CD4-positive, alpha-beta memory T cell (primary cell): ENCODE measurements at regions of chr7 and their contacts with region 1.

Region 1: GRCh38 chr7:121547544-121548092 is 151.5 kb upstream of the FAM3C start:
- DNase-seq: peak in 4 of 5 donors; percentile 42 to 58 (median 48)
- H3K4me3 ChIP-seq: no peak overlapping the region
- H3K4me3 Mint-ChIP-seq: no peak overlapping the region
- H3K27ac ChIP-seq: no peak overlapping the region
- H3K27ac Mint-ChIP-seq: no peak overlapping the region
- H3K4me1 ChIP-seq: no peaks in the 10 kb centered on the region
- H3K4me1 Mint-ChIP-seq: peaks cover 0 to 6% (median 5%) of the 10 kb centered on the region in 4 donors
- H3K27me3 ChIP-seq: no peaks in the 10 kb centered on the region
- H3K27me3 Mint-ChIP-seq: peaks cover 0 to 3% of the 10 kb centered on the region in 2 donors

Region 2: GRCh38 chr7:120838281-120838682 is 709.3 kb before region 1 on chr7:
- CTCF ChIA-PET with region 1: no interaction called
- POLR2A ChIA-PET with region 1: no interaction called
- intact Hi-C with region 1: no loop called
- DNase-seq: no peak
- H3K4me3 ChIP-seq: no peak overlapping the region
- H3K4me3 Mint-ChIP-seq: no peak overlapping the region
- H3K27ac ChIP-seq: no peak overlapping the region
- H3K27ac Mint-ChIP-seq: peak overlapping the region in 1 of 7 donors; percentile 26
- H3K4me1 ChIP-seq: no peaks in the 10 kb centered on the region
- H3K4me1 Mint-ChIP-seq: no peaks in the 10 kb centered on the region
- H3K27me3 ChIP-seq: no peaks in the 10 kb centered on the region
- H3K27me3 Mint-ChIP-seq: peaks cover 4 to 8% of the 10 kb centered on the region in 2 donors

Region 3: DNA sequence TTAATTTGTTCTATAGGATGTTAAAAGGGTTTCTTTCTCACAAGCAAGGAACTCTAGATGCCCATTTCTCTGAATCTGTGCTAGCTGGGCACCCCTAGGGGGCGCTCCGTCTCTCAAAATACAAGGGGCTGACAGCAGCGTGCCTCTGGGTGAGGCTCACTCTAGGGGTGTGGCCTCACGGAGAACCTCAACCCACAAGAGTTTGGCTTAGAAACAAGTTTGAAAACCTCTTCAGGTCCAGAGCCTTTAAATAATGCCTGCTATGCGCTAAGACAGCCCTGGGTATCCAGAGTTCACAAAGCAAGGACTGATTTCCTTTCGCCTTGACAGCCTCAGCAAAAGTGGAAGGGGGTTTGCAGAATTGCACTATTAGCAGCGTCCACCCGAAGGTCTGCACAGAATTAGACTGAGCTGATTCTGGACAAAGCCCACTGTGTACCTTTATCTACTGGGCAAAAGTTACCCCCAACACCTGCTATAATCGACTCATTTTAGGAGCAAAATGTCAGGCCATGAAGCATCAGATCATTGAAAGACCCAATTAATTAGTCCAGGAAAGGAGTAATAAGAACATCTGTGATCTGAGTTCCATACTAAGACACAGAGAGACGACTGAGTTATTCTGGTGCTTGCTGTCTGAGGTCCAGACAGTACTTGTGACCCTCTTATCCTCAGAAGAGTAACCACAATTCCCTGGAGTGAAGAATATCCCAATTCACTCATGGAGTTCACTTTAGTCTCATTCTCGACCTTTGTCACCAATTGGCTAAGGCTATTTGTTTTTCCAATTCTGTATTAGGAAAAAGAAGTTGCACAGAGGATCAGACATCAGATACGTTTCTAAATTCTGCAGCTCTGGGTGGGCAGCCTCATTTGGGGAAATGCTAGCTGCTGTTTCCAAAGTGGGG is 559.7 kb before region 1 on chr7:
- CTCF ChIA-PET with region 1: interaction called, 3 read pairs
- POLR2A ChIA-PET with region 1: no interaction called
- intact Hi-C with region 1: loop called (anchors 1 kb)
- DNase-seq: peak; percentile 81 to 88 (median 86)
- H3K4me3 ChIP-seq: peak overlapping the region in 1 of 2 donors; percentile 22
- H3K4me3 Mint-ChIP-seq: peak overlapping the region; percentile 61 to 82 (median 75)
- H3K27ac ChIP-seq: no peak overlapping the region
- H3K27ac Mint-ChIP-seq: peak overlapping the region in 1 of 7 donors; percentile 15
- H3K4me1 ChIP-seq: peaks cover 15% of the 10 kb centered on the region
- H3K4me1 Mint-ChIP-seq: peaks cover 13 to 20% (median 15%) of the 10 kb centered on the region in 4 donors
- H3K27me3 ChIP-seq: peaks cover 39% of the 10 kb centered on the region
- H3K27me3 Mint-ChIP-seq: peaks cover 30 to 34% of the 10 kb centered on the region in 2 donors

Region 4: GRCh38 chr7:121366852-121367431 is 180.7 kb before region 1 on chr7:
- CTCF ChIA-PET with region 1: interaction called, 108 read pairs
- POLR2A ChIA-PET with region 1: no interaction called
- intact Hi-C with region 1: loop called (anchors 1 kb)
- DNase-seq: peak in 4 of 5 donors; percentile 48 to 56 (median 56)
- H3K4me3 ChIP-seq: no peak overlapping the region
- H3K4me3 Mint-ChIP-seq: no peak overlapping the region
- H3K27ac ChIP-seq: no peak overlapping the region
- H3K27ac Mint-ChIP-seq: peak overlapping the region in 1 of 7 donors; percentile 59
- H3K4me1 ChIP-seq: peaks cover 6% of the 10 kb centered on the region
- H3K4me1 Mint-ChIP-seq: peaks cover 5 to 11% (median 7%) of the 10 kb centered on the region in 4 donors
- H3K27me3 ChIP-seq: no peaks in the 10 kb centered on the region
- H3K27me3 Mint-ChIP-seq: no peaks in the 10 kb centered on the region

Region 5: DNA sequence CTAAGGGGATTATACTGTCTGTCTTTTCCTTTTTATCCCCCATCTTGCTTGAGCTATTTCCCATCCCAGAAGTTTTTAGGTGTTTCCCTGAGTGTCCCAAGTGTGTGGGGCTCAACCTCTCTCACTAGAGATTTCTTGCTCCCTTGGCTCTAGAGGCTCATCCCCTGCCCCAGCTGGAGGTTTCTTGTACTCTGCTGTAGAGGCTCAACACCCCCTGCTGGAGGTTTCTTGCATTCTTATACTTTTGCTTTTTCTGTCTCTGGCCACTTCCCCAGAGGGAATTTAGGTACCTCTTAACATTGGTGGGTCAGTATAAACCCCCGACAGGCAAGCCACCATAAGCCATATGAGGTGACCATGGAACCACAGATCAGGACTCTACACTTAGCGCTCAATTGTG is 37.3 kb before region 1 on chr7:
- CTCF ChIA-PET with region 1: no interaction called
- POLR2A ChIA-PET with region 1: no interaction called
- intact Hi-C with region 1: loop called (anchors 1 kb)
- DNase-seq: peak in 4 of 5 donors; percentile 21 to 34 (median 27)
- H3K4me3 ChIP-seq: no peak overlapping the region
- H3K4me3 Mint-ChIP-seq: no peak overlapping the region
- H3K27ac ChIP-seq: no peak overlapping the region
- H3K27ac Mint-ChIP-seq: no peak overlapping the region
- H3K4me1 ChIP-seq: no peaks in the 10 kb centered on the region
- H3K4me1 Mint-ChIP-seq: no peaks in the 10 kb centered on the region
- H3K27me3 ChIP-seq: no peaks in the 10 kb centered on the region
- H3K27me3 Mint-ChIP-seq: peaks cover 0 to 2% of the 10 kb centered on the region in 2 donors